Activated CD4-positive, alpha-beta T cell treated with anti-CD3 and anti-CD28 coated beads for 36 hours (primary cell): ENCODE measurements at regions of chr13 and their contacts with region 1.

Region 1: DNA sequence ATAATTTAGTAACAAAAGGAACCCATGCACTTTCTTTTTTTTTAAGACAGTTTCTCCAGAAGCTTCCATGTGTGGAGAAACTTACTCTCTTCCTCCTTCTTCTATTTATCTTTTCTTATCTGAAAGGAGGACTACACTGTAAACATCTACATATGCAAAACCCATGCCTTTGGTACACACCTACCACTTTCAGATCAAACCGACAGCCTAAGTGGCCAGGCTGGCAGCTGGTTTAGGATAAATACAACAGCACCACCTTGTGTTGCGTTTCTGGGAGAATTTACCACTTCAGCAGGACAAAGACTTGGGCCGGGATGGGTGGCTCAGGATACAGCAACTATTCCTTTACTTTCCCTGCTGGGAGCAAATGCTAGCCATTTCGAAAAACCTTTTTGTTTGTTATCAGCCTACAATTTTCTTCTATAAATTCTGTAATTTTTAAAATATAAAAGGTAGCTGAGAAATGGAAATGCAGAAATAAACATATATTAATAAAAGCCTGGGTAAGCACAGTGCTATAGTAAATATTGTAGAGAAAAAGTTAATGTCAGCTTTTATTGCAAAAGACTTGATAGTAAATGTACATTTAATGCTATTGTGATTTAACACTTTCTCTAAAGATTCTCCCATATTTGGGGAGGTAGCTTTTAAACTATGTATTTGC is 94.0 kb upstream of the RFC3 start:
- DNase-seq: peak; percentile 81
- ATAC-seq: peak; percentile 90
- H3K4me3 Mint-ChIP-seq: no peak overlapping the region
- H3K27ac Mint-ChIP-seq: peak overlapping the region; percentile 87
- H3K4me1 Mint-ChIP-seq: peaks cover 30% of the 10 kb centered on the region
- H3K27me3 Mint-ChIP-seq: no peaks in the 10 kb centered on the region

Region 2: DNA sequence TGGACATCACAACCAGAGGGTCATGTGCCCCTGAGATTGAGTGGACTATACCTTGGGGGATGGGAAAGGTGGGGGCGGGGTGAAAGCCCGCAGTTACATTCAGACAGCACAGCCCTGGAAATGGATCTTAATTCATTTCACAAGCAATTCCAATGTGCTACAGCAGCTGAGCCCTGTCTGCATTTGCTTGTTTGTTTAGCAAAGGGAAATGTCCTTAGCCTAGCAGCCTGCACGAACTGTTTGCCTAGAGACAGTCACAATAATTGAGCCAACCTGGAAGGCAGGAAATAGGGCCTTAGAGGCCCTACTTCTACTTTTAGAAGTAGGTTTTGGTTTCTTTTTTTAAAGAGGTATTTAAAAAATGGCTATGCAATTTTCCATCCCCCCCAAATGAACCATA is 885.0 kb before region 1 on chr13:
- CTCF ChIA-PET with region 1: no interaction called
- POLR2A ChIA-PET with region 1: no interaction called
- intact Hi-C with region 1: no loop called
- DNase-seq: no peak
- ATAC-seq: peak; percentile 57
- H3K4me3 Mint-ChIP-seq: no peak overlapping the region
- H3K27ac Mint-ChIP-seq: no peak overlapping the region
- H3K4me1 Mint-ChIP-seq: peaks cover 4% of the 10 kb centered on the region
- H3K27me3 Mint-ChIP-seq: no peaks in the 10 kb centered on the region

Region 3: DNA sequence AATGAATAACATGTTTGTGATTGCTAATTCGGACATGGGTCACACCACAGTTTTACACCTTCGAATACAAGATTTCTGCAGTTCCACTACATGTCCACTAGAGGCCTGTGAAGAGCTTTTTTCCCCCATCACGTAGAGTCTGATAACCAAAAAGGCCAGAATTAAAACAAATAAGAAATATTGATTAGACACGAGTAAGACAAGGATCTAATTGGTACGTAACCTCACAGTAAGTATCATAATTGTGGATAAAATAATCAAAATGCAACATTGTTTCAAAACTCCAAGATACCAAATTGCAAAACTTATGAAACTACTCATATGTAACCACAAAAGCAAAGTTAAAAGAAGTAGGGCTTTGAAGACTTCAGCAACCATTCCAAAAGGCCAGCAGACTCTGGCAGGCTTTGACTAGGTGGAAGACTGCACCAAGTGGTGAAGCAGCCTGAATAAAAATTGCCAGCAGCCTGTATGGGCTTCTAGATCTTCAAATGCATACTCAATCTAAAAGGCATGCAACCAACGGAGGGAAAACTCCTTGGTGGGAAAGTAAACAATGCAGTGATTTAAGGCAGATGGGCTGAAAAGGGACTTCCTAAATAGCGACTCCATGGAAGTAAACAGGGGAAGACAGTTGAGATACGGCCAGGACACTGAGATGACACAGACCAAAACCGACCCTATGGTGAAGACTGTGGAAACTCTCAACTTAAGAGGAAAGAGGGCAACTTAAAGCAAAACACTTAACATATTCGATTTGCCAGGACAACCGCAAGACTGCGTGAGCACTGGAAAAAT is 495.1 kb before region 1 on chr13:
- CTCF ChIA-PET with region 1: interaction called, 13 read pairs
- POLR2A ChIA-PET with region 1: no interaction called
- intact Hi-C with region 1: loop called (anchors 1 to 2 kb)
- DNase-seq: no peak
- ATAC-seq: peak; percentile 81
- H3K4me3 Mint-ChIP-seq: no peak overlapping the region
- H3K27ac Mint-ChIP-seq: peak overlapping the region; percentile 10
- H3K4me1 Mint-ChIP-seq: peaks cover 7% of the 10 kb centered on the region
- H3K27me3 Mint-ChIP-seq: peaks cover 6% of the 10 kb centered on the region

Region 4: GRCh38 chr13:33610471-33611015 is 113.4 kb before region 1 on chr13:
- CTCF ChIA-PET with region 1: interaction called, 4 read pairs
- POLR2A ChIA-PET with region 1: no interaction called
- intact Hi-C with region 1: loop called (anchors 1 kb)
- DNase-seq: peak; percentile 77
- ATAC-seq: peak; percentile 54
- H3K4me3 Mint-ChIP-seq: peak overlapping the region; percentile 69
- H3K27ac Mint-ChIP-seq: peak overlapping the region; percentile 98
- H3K4me1 Mint-ChIP-seq: peaks cover 50% of the 10 kb centered on the region
- H3K27me3 Mint-ChIP-seq: peaks cover 2% of the 10 kb centered on the region

Region 5: GRCh38 chr13:33665626-33666175 is 58.2 kb before region 1 on chr13:
- CTCF ChIA-PET with region 1: no interaction called
- POLR2A ChIA-PET with region 1: no interaction called
- intact Hi-C with region 1: no loop called
- DNase-seq: no peak
- ATAC-seq: no peak
- H3K4me3 Mint-ChIP-seq: no peak overlapping the region
- H3K27ac Mint-ChIP-seq: no peak overlapping the region
- H3K4me1 Mint-ChIP-seq: peaks cover 7% of the 10 kb centered on the region
- H3K27me3 Mint-ChIP-seq: no peaks in the 10 kb centered on the region

Region 6: GRCh38 chr13:33678906-33679657 is 44.8 kb before region 1 on chr13:
- CTCF ChIA-PET with region 1: no interaction called
- POLR2A ChIA-PET with region 1: interaction called, 3 read pairs
- intact Hi-C with region 1: loop called (anchors 1 kb)
- DNase-seq: peak; percentile 91
- ATAC-seq: peak; percentile 90
- H3K4me3 Mint-ChIP-seq: peak overlapping the region; percentile 64
- H3K27ac Mint-ChIP-seq: peak overlapping the region; percentile 89
- H3K4me1 Mint-ChIP-seq: peaks cover 37% of the 10 kb centered on the region
- H3K27me3 Mint-ChIP-seq: no peaks in the 10 kb centered on the region

Region 7: GRCh38 chr13:33690354-33690753 is 33.5 kb before region 1 on chr13:
- CTCF ChIA-PET with region 1: no interaction called
- POLR2A ChIA-PET with region 1: no interaction called
- intact Hi-C with region 1: no loop called
- DNase-seq: peak; percentile 22
- ATAC-seq: peak; percentile 53
- H3K4me3 Mint-ChIP-seq: no peak overlapping the region
- H3K27ac Mint-ChIP-seq: no peak overlapping the region
- H3K4me1 Mint-ChIP-seq: peaks cover 1% of the 10 kb centered on the region
- H3K27me3 Mint-ChIP-seq: no peaks in the 10 kb centered on the region

Region 8: GRCh38 chr13:34156841-34157365 is 433.0 kb after region 1 on chr13:
- CTCF ChIA-PET with region 1: no interaction called
- POLR2A ChIA-PET with region 1: no interaction called
- intact Hi-C with region 1: no loop called
- DNase-seq: peak; percentile 80
- ATAC-seq: peak; percentile 96
- H3K4me3 Mint-ChIP-seq: peak overlapping the region; percentile 20
- H3K27ac Mint-ChIP-seq: peak overlapping the region; percentile 68
- H3K4me1 Mint-ChIP-seq: peaks cover 14% of the 10 kb centered on the region
- H3K27me3 Mint-ChIP-seq: peaks cover 24% of the 10 kb centered on the region